ENCODE measurements at regions of chr11 and their contacts with region 1.

Region 1: DNA sequence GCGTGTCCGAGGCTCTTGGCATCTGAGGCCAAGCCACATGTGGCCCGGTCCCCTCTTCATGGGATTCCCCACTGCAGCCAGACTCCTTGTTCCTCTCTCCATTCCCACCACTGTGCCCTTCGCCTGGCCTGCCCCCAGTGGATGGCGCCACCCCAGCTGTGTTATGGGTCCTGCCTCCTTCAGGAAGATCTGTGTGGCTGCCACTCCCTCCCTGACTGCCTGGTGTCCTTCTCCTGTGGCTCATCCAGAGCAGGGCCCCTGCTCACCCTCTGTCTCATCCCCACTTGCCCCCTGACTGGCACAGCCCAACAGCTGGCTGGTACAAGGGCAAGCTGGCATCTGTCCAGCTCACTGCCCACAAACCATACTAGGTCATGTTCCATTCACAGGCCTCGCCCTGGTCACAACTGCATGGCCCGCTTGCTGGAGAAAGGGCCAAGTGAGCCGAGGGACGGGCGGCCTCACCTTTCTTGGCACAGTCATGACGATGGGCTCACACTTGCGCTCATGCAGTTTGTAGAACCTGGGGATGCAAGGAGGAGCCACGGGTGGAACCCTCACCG is 1.9 kb upstream of the PTPRCAP start:
- DNase-seq: peak in 1 of 9 donors; percentile 55
- ATAC-seq: no peak
- H3K4me3 ChIP-seq: peak overlapping the region; percentile 100
- H3K4me3 Mint-ChIP-seq: peak overlapping the region; percentile 85 to 99 (median 97)
- H3K27ac ChIP-seq: peak overlapping the region; percentile 85
- H3K27ac Mint-ChIP-seq: peak overlapping the region; percentile 90 to 97 (median 95)
- H3K4me1 ChIP-seq: peaks cover 38 to 64% of the 10 kb centered on the region in 2 donors
- H3K4me1 Mint-ChIP-seq: peaks cover 40 to 74% (median 55%) of the 10 kb centered on the region in 7 donors
- H3K27me3 ChIP-seq: no peaks in the 10 kb centered on the region
- H3K27me3 Mint-ChIP-seq: no peaks in the 10 kb centered on the region

Region 2: DNA sequence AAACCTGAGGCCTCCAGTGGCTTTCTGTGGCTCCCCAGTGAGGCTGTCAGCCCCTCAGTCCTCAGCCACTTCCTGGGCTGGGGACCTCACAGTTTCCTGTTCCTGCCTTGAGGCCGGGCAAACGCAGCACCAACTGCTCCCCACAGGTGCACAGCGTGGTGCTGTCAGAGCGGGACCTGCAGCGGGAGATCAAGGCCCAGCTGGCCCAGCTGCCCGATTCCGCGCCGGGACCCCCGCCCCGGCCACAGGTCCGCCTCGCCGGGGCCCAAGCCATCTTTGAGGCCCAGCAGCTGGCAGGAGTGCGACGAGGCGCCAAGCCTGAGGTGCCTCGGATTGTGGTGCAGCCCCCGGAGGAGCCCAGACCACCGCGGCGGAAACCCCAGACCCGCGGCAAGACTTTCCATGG is 30.1 kb before region 1 on chr11:
- CTCF ChIA-PET with region 1: interaction called, 37 read pairs
- POLR2A ChIA-PET with region 1: interaction called, 1,530 read pairs
- intact Hi-C with region 1: loop called in 1 of 2 experiments (anchors 1 kb)
- DNase-seq: peak in 8 of 9 donors; percentile 62 to 82 (median 78)
- ATAC-seq: peak; percentile 78
- H3K4me3 ChIP-seq: peak overlapping the region; percentile 98
- H3K4me3 Mint-ChIP-seq: peak overlapping the region; percentile 80 to 100 (median 96)
- H3K27ac ChIP-seq: peak overlapping the region; percentile 87
- H3K27ac Mint-ChIP-seq: peak overlapping the region; percentile 83 to 98 (median 93)
- H3K4me1 ChIP-seq: peaks cover 86% of the 10 kb centered on the region in 2 donors
- H3K4me1 Mint-ChIP-seq: peaks cover 52 to 90% (median 78%) of the 10 kb centered on the region in 7 donors
- H3K27me3 ChIP-seq: no peaks in the 10 kb centered on the region
- H3K27me3 Mint-ChIP-seq: peaks cover 0 to 8% (median 0%) of the 10 kb centered on the region in 5 donors

Region 3: GRCh38 chr11:67420646-67421420 is 18.6 kb before region 1 on chr11:
- CTCF ChIA-PET with region 1: interaction called, 23 read pairs
- POLR2A ChIA-PET with region 1: interaction called, 602 read pairs
- intact Hi-C with region 1: loop called in 1 of 2 experiments (anchors 1 kb)
- DNase-seq: peak; percentile 97 to 100 (median 97)
- ATAC-seq: peak; percentile 96
- H3K4me3 ChIP-seq: peak overlapping the region; percentile 56
- H3K4me3 Mint-ChIP-seq: peak overlapping the region; percentile 74 to 92 (median 82)
- H3K27ac ChIP-seq: peak overlapping the region; percentile 77
- H3K27ac Mint-ChIP-seq: peak overlapping the region; percentile 69 to 98 (median 92)
- H3K4me1 ChIP-seq: peaks cover 42 to 49% of the 10 kb centered on the region in 2 donors
- H3K4me1 Mint-ChIP-seq: peaks cover 24 to 60% (median 53%) of the 10 kb centered on the region in 7 donors
- H3K27me3 ChIP-seq: no peaks in the 10 kb centered on the region
- H3K27me3 Mint-ChIP-seq: peaks cover 0 to 15% (median 0%) of the 10 kb centered on the region in 5 donors

Region 4: GRCh38 chr11:67428052-67428914 is 11.1 kb before region 1 on chr11 and contains the start of gene RPS6KB2:
- CTCF ChIA-PET with region 1: interaction called, 5 read pairs
- POLR2A ChIA-PET with region 1: interaction called, 602 read pairs
- intact Hi-C with region 1: loop called (anchors 1 kb)
- DNase-seq: peak; percentile 95 to 100 (median 98)
- ATAC-seq: peak; percentile 97
- H3K4me3 ChIP-seq: peak within 1 kb of the TSS; percentile 82
- H3K4me3 Mint-ChIP-seq: peak within 1 kb of the TSS; percentile 92 to 100 (median 98)
- H3K27ac ChIP-seq: peak within 1 kb of the TSS; percentile 97
- H3K27ac Mint-ChIP-seq: peak within 1 kb of the TSS; percentile 94 to 98 (median 96)
- H3K4me1 ChIP-seq: peaks cover 19 to 38% of the 10 kb centered on the region in 2 donors
- H3K4me1 Mint-ChIP-seq: peaks cover 19 to 62% (median 43%) of the 10 kb centered on the region in 7 donors
- H3K27me3 ChIP-seq: no peaks in the 10 kb centered on the region
- H3K27me3 Mint-ChIP-seq: no peaks in the 10 kb centered on the region
- total RNA-seq, gene RPS6KB2: 61.9 to 83.9 (median 77.7) TPM

Region 5: GRCh38 chr11:67452141-67452952 is 12.9 kb after region 1 on chr11 and contains the start of gene GPR152:
- CTCF ChIA-PET with region 1: interaction called, 4 read pairs
- POLR2A ChIA-PET with region 1: interaction called, 206 read pairs
- intact Hi-C with region 1: no loop called
- DNase-seq: no peak
- ATAC-seq: no peak
- H3K4me3 ChIP-seq: no peak within 1 kb of the TSS
- H3K4me3 Mint-ChIP-seq: peak within 1 kb of the TSS in 2 of 10 donors; percentile 27 to 31
- H3K27ac ChIP-seq: no peak within 1 kb of the TSS
- H3K27ac Mint-ChIP-seq: peak within 1 kb of the TSS in 4 of 9 donors; percentile 17 to 68 (median 40)
- H3K4me1 ChIP-seq: peaks cover 9 to 24% of the 10 kb centered on the region in 2 donors
- H3K4me1 Mint-ChIP-seq: peaks cover 15 to 42% (median 23%) of the 10 kb centered on the region in 7 donors
- H3K27me3 ChIP-seq: no peaks in the 10 kb centered on the region
- H3K27me3 Mint-ChIP-seq: no peaks in the 10 kb centered on the region
- total RNA-seq, gene GPR152: not detected

Region 6: DNA sequence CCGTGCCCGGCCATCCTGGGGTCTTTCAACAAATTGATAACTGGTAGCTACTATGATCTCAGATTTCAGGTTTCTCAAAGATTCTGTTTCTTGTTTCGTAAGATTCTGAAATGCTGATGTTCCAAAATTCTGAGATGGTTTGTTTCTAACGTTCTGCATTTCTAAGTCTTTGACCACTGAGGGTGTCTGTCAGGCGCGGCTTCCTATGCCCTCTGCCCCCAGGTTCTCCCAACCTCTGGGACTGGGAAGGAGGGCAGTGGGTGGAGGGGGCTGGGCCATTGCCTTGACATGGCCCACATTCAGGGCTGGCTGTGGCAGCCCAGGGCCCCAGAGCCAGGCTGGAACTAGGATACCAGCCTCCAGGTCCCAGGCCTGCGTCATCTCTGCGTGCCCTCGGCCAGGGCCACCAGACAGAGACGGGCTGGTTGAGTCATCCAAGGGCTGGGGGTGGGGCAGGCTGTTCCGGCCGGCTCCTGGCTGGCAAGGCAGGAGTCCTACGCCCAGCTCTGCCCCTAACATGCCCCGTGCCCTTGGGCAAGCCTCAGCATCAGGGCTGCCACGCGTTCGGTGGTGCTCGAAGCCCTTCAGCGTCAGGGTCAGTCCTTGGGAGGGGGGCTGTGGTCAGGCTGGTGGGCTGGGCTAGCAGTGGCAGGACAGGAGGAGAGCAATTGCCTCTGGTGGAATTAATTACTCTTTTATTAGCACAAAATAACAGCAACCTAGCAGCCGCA is 24.4 kb after region 1 on chr11:
- CTCF ChIA-PET with region 1: interaction called, 11 read pairs
- POLR2A ChIA-PET with region 1: interaction called, 230 read pairs
- intact Hi-C with region 1: loop called (anchors 1 kb)
- DNase-seq: peak in 1 of 9 donors; percentile 12
- ATAC-seq: peak; percentile 28
- H3K4me3 ChIP-seq: peak overlapping the region; percentile 66
- H3K4me3 Mint-ChIP-seq: peak overlapping the region; percentile 75 to 94 (median 87)
- H3K27ac ChIP-seq: peak overlapping the region; percentile 96
- H3K27ac Mint-ChIP-seq: peak overlapping the region; percentile 82 to 97 (median 93)
- H3K4me1 ChIP-seq: peaks cover 20 to 37% of the 10 kb centered on the region in 2 donors
- H3K4me1 Mint-ChIP-seq: peaks cover 23 to 44% (median 33%) of the 10 kb centered on the region in 7 donors
- H3K27me3 ChIP-seq: no peaks in the 10 kb centered on the region
- H3K27me3 Mint-ChIP-seq: peaks cover 0 to 2% (median 0%) of the 10 kb centered on the region in 5 donors

Region 7: GRCh38 chr11:67468835-67469811 is 29.7 kb after region 1 on chr11 and contains the start of gene TMEM134:
- CTCF ChIA-PET with region 1: interaction called, 11 read pairs
- POLR2A ChIA-PET with region 1: interaction called, 230 read pairs
- intact Hi-C with region 1: loop called (anchors 1 kb)
- DNase-seq: peak; percentile 82 to 95 (median 89)
- ATAC-seq: peak; percentile 92
- H3K4me3 ChIP-seq: peak within 1 kb of the TSS; percentile 74
- H3K4me3 Mint-ChIP-seq: peak within 1 kb of the TSS; percentile 87 to 95 (median 90)
- H3K27ac ChIP-seq: peak within 1 kb of the TSS; percentile 94
- H3K27ac Mint-ChIP-seq: peak within 1 kb of the TSS; percentile 79 to 97 (median 88)
- H3K4me1 ChIP-seq: peaks cover 17 to 37% of the 10 kb centered on the region in 2 donors
- H3K4me1 Mint-ChIP-seq: peaks cover 23 to 42% (median 29%) of the 10 kb centered on the region in 7 donors
- H3K27me3 ChIP-seq: no peaks in the 10 kb centered on the region
- H3K27me3 Mint-ChIP-seq: peaks cover 0 to 6% (median 0%) of the 10 kb centered on the region in 5 donors
- total RNA-seq, gene TMEM134: 52.4 to 94.6 (median 70.6) TPM

Region 8: GRCh38 chr11:68020575-68020974 is 581.2 kb after region 1 on chr11:
- CTCF ChIA-PET with region 1: no interaction called
- POLR2A ChIA-PET with region 1: no interaction called
- intact Hi-C with region 1: no loop called
- DNase-seq: no peak
- ATAC-seq: no peak
- H3K4me3 ChIP-seq: no peak overlapping the region
- H3K4me3 Mint-ChIP-seq: no peak overlapping the region
- H3K27ac ChIP-seq: no peak overlapping the region
- H3K27ac Mint-ChIP-seq: no peak overlapping the region
- H3K4me1 ChIP-seq: no peaks in the 10 kb centered on the region
- H3K4me1 Mint-ChIP-seq: peaks cover 0 to 4% (median 0%) of the 10 kb centered on the region in 7 donors
- H3K27me3 ChIP-seq: no peaks in the 10 kb centered on the region
- H3K27me3 Mint-ChIP-seq: no peaks in the 10 kb centered on the region

Measured in naive thymus-derived CD4-positive, alpha-beta T cell (primary cell).